Activated CD8-positive, alpha-beta T cell treated with anti-CD3 and anti-CD28 coated beads for 36 hours (primary cell): ENCODE measurements at regions of chr9 and their contacts with region 1.

Region 1: DNA sequence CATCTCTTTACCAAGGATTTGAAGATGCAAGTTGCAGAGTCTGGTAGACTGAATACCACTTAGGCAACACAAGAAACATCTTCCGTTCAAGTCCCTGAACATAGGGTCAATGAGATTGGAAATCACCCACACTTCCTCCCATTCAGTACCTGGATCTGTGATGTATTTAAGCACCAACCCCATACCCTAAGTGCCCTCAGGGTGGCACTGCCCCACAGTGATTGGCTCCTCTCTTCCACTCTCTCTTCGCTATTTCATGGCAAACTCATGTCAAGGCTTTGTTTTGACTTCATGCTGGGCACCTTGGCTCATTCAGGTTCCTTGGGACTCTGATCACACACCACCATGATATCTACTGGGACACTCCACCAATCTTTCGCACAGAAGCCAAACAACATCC is 53.7 kb downstream of the GGTA1 start:
- DNase-seq: peak; percentile 57
- ATAC-seq: peak; percentile 77
- H3K4me3 Mint-ChIP-seq: no peak overlapping the region
- H3K27ac Mint-ChIP-seq: no peak overlapping the region
- H3K4me1 Mint-ChIP-seq: peaks cover 7% of the 10 kb centered on the region
- H3K27me3 Mint-ChIP-seq: peaks cover 22% of the 10 kb centered on the region
- CTCF ChIP-seq: no peak

Region 2: DNA sequence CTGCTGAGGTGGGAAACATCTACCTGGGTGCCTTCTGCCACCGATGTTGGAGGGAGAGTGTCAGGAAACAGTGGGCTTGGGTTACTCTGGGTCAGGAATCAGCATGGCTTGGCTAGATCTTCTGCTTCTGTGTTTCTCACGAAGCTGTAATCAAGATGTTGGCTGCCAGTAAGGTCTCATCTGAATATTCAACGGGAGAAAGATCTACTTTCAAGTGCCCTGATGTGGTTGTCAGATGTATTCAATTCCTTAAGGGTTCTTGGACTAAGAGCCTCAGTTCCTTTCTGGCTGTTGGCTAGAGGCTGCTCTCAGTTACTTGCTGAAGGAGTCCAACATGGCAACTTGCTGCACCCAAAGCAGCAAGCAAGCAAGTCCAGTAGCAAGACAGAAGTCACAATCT is 34.0 kb before region 1 on chr9:
- CTCF ChIA-PET with region 1: no interaction called
- POLR2A ChIA-PET with region 1: no interaction called
- intact Hi-C with region 1: no loop called
- DNase-seq: no peak
- ATAC-seq: no peak
- H3K4me3 Mint-ChIP-seq: no peak overlapping the region
- H3K27ac Mint-ChIP-seq: no peak overlapping the region
- H3K4me1 Mint-ChIP-seq: no peaks in the 10 kb centered on the region
- H3K27me3 Mint-ChIP-seq: peaks cover 1% of the 10 kb centered on the region
- CTCF ChIP-seq: no peak

Region 3: GRCh38 chr9:121474231-121474891 is 28.4 kb after region 1 on chr9:
- CTCF ChIA-PET with region 1: no interaction called
- POLR2A ChIA-PET with region 1: no interaction called
- intact Hi-C with region 1: no loop called
- DNase-seq: no peak
- ATAC-seq: no peak
- H3K4me3 Mint-ChIP-seq: no peak overlapping the region
- H3K27ac Mint-ChIP-seq: no peak overlapping the region
- H3K4me1 Mint-ChIP-seq: no peaks in the 10 kb centered on the region
- H3K27me3 Mint-ChIP-seq: peaks cover 9% of the 10 kb centered on the region
- CTCF ChIP-seq: no peak

Region 4: GRCh38 chr9:121498150-121498486 is 52.1 kb after region 1 on chr9:
- CTCF ChIA-PET with region 1: interaction called, 4 read pairs
- POLR2A ChIA-PET with region 1: no interaction called
- intact Hi-C with region 1: loop called (anchors 2 kb)
- DNase-seq: peak; percentile 72
- ATAC-seq: peak; percentile 83
- H3K4me3 Mint-ChIP-seq: peak overlapping the region; percentile 23
- H3K27ac Mint-ChIP-seq: no peak overlapping the region
- H3K4me1 Mint-ChIP-seq: peaks cover 18% of the 10 kb centered on the region
- H3K27me3 Mint-ChIP-seq: peaks cover 53% of the 10 kb centered on the region
- CTCF ChIP-seq: peak; percentile 66